ENCODE measurements at regions of chr10 and their contacts with region 1.

Region 1: GRCh38 chr10:102268375-102268888 is 23.1 kb downstream of the GBF1 start:
- DNase-seq: no peak
- CTCF ChIP-seq: no peak

Region 2: DNA sequence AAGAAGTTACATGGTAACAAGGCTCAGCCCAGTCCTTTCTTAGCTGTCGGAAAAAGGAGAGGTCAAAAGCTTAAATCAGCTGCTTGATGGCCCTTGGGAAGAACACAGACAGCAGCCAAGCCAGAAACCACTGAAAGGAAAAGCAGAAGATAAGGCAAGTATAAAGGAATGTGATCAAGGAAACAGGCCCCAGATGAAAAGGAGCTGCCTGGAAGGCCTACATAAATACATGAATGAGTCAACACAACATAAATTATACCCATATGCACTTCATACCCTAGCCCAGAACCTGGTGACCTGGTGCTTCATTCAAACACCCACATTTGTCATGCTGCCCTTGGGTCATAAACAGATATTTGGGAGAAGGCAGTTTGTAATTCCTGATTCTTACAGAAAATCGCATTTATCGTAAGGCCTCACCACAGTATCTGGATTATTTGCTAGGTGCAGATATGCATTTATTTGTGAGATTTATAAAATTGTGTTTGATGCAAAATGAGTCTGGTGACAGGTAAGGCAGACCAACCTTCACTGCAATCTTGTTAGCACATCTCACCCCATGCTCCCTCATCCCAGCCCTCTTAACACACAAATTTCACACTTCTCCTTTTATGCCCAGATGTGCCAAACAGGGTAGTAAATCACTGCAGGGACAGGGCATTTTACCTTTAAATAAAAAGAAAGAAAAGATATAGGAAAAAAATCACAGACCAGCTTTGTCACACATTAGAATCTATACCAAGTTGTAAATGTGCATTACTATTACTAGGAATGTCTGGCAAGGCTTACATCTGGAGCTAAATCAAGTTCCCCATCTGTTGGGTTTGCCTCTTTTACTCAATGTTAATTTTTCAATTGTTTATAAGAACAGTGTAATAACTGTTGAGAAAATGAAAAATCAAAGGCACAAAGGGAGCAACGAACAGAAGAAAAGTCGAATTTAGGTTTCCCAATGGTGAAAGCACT is 329.8 kb before region 1 on chr10:
- CTCF ChIA-PET with region 1: no interaction called
- POLR2A ChIA-PET with region 1: no interaction called
- DNase-seq: no peak
- CTCF ChIP-seq: no peak

Region 3: DNA sequence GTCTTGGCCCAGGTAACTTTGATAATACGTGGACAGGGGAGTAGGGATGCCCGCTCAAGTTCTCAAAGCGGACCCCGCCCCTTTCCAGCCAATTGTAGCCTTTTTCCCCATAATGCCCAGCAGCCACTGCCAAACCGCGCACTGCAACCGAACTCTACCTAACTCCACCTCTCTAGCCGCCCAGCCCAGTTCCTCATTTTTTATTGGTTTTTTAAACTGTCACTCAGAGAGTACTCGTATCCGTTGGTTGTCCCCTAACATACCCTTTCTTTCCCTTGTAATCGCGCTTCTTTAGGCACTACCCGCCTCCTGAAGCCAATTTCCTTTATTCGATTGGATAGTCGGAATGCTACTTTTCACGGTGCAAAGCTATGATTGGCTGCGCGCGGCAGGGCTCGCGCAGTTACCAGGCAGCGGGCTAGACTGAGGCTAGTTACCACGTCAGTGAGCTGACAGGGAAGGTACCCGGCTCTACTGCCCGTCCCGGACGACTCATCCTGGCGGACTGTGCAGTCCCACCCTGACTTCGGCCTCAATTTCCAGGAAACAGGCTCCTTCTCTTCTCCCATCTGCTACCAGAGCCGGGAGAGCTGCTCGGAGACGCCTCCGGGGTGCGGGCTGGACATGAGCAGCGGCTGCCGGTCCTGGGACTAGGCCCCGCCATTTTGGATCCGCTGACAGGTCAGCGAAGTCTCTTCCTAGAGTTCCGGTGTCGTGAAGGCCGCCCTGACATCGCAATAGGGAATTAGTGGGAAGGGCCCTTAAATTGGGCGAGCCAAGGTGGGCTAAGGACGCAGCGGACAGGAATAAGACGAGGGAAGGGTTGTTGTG is 23.1 kb before region 1 on chr10 and contains the start of gene GBF1:
- CTCF ChIA-PET with region 1: interaction called, 10 read pairs
- POLR2A ChIA-PET with region 1: interaction called, 10 read pairs
- DNase-seq: peak; percentile 96
- CTCF ChIP-seq: no peak

Region 4: DNA sequence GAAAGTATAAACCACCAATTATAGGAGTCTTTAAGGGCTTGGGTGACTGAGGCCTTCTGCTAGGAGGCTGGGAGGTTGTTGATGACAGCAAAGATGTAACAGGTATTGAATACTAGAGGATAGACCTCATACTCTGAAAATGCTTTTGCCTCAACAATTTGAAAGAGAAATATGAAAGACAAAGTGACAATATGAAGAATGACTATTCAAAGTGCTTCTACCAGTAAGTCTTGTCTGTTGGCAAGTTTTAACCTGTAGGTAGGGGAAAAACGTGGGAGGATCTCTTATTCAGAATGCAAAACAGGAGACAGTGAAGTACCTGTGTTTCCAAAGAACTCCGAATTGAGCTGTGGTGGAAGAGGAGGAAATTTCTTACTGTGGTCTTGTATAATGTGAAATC is 15.1 kb after region 1 on chr10:
- CTCF ChIA-PET with region 1: interaction called, 18 read pairs
- POLR2A ChIA-PET with region 1: no interaction called
- DNase-seq: no peak
- CTCF ChIP-seq: no peak

Region 5: DNA sequence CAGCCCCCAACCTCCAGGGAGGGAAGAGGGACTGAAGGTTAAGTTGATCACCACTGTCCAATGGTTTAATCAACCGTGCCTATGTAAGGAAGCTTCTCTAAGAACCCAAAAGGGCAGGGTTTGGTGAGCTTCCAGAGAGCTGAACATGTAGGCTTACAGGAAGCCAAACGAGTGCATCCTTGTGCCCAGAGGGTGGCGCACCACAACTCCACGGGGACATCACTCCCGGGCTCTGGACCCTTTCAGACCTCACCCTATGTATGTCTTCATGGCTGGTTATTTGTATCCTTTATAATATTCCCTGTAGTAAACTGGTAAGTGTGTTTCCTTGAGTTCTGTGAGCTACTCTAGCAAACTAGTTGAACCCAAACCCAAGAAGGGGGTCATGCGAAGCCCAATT is 115.6 kb after region 1 on chr10:
- CTCF ChIA-PET with region 1: no interaction called
- POLR2A ChIA-PET with region 1: no interaction called
- DNase-seq: no peak
- CTCF ChIP-seq: no peak

Measured in GM10248 (cell line).